Lower leg skin (tissue), 4 donors: ENCODE measurements at regions of chr22 and their contacts with region 1.

Region 1: GRCh38 chr22:49789289-49790141 is 38.2 kb downstream of the BRD1 start:
- DNase-seq: peak in 1 of 2 donors; percentile 26
- H3K4me3 ChIP-seq: no peak overlapping the region
- CTCF ChIP-seq: no peak
- POLR2A ChIP-seq: no peak

Region 2: DNA sequence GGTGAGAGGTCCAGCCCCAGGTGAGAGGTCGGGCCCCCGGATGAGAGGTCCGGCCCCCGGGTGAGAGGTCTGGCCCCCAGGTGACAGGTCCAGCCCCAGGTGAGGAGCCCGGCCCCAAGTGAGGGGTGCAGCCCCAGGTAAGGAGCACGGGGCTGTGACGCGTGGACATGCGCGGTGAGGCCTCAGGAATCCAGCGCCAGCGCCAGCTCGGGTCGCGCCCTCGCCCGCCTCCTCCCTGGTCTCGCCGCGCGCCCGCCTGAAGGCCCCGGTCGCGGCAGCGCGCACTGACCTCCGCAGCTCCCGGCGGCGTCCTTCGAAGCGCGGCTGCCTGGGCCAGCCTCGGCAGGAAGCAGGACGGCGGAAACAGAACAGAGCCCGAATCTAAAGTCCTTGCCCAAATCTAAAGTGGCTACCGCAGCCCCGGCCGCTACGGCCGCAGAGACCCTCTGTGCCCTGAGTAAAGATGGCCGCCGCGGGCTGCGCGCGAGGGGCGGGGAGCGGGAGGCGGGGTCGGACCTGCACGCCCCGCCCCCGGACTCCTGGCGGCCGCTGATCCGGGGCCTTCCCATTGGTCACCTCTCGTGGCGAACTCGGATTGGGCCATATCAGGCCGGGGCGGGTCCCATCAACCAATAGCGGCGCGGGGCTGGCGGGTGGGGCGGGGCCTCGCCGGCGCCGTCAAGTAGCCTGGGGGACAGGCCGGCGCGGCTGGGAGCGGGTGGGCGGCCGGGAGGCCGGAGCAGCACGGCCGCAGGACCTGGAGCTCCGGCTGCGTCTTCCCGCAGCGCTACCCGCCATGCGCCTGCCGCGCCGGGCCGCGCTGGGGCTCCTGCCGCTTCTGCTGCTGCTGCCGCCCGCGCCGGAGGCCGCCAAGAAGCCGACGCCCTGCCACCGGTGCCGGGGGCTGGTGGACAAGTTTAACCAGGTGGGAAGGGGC is 128.7 kb after region 1 on chr22 and contains the starts of genes ALG12 and CRELD2:
- intact Hi-C with region 1: loop called (anchors 10 kb)
- DNase-seq: peak; percentile 97 to 100
- H3K4me3 ChIP-seq: peak within 1 kb of the TSS; percentile 60
- CTCF ChIP-seq: no peak
- POLR2A ChIP-seq: no peak
- total RNA-seq, gene ALG12: 7.5 to 25.6 (median 16.1) TPM
- total RNA-seq, gene CRELD2: 9.1 to 28.0 (median 18.0) TPM